Dendritic cell treated with granulocyte-macrophage colony-stimulating factor and Interleukin-4, amounts not matched to agents 40 ng/mL and 50 ng/mL, for 4 days (primary cell): ENCODE measurements at regions of chr9 and their contacts with region 1.

Region 1: GRCh38 chr9:128927731-128928411 is 7.1 kb downstream of the PHYHD1 start:
- H3K4me3 Mint-ChIP-seq: no peak overlapping the region
- H3K27ac Mint-ChIP-seq: no peak overlapping the region
- H3K4me1 Mint-ChIP-seq: peaks cover 4% of the 10 kb centered on the region
- H3K27me3 Mint-ChIP-seq: no peaks in the 10 kb centered on the region

Region 2: DNA sequence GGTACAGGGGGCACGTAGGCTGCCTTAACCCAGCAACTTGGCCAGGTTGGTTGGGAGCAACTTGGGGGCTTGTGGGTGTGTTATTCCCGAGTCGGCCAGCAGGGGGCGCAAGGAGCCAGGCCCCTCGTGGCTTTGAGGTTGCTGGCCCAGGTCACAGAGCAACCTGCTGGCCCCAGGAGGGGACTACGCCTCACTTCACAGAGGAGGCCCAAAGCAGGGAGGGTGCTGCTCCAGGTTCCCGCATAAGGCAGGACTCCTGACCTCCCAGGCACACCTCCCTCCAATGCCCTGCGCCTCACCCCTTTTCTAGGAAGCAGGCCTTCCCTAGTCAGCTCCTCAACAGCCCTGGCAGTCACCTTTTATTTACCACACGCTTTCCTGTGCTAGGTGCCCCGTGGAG is 64.2 kb before region 1 on chr9:
- intact Hi-C with region 1: loop called (anchors 1 kb)
- H3K4me3 Mint-ChIP-seq: no peak overlapping the region
- H3K27ac Mint-ChIP-seq: no peak overlapping the region
- H3K4me1 Mint-ChIP-seq: peaks cover 24% of the 10 kb centered on the region
- H3K27me3 Mint-ChIP-seq: no peaks in the 10 kb centered on the region